IMR-90 (cell line): ENCODE measurements at regions of chr2 and their contacts with region 1.

Region 1: GRCh38 chr2:197416268-197416667 is 18.6 kb downstream of the SF3B1 start:
- DNase-seq: no peak
- ATAC-seq: no peak
- H3K4me3 ChIP-seq: no peak overlapping the region
- H3K27ac ChIP-seq: no peak overlapping the region
- H3K4me1 ChIP-seq: no peaks in the 10 kb centered on the region; the same call in 1 of the 2 replicates
- H3K27me3 ChIP-seq: no peaks in the 10 kb centered on the region
- CTCF ChIP-seq: no peak
- POLR2A ChIP-seq: no peak
- RAD21 ChIP-seq: no peak

Region 2: GRCh38 chr2:197480165-197481036 is 64.1 kb after region 1 on chr2:
- CTCF ChIA-PET with region 1: no interaction called
- POLR2A ChIA-PET with region 1: no interaction called
- dilution Hi-C with region 1: no loop called
- in situ Hi-C with region 1: no loop called
- intact Hi-C with region 1: loop called (anchors 5 kb)
- DNase-seq: no peak
- ATAC-seq: no peak
- H3K4me3 ChIP-seq: no peak overlapping the region
- H3K27ac ChIP-seq: no peak overlapping the region
- H3K4me1 ChIP-seq: no peaks in the 10 kb centered on the region
- H3K27me3 ChIP-seq: no peaks in the 10 kb centered on the region
- CTCF ChIP-seq: no peak
- POLR2A ChIP-seq: no peak
- RAD21 ChIP-seq: no peak

Region 3: DNA sequence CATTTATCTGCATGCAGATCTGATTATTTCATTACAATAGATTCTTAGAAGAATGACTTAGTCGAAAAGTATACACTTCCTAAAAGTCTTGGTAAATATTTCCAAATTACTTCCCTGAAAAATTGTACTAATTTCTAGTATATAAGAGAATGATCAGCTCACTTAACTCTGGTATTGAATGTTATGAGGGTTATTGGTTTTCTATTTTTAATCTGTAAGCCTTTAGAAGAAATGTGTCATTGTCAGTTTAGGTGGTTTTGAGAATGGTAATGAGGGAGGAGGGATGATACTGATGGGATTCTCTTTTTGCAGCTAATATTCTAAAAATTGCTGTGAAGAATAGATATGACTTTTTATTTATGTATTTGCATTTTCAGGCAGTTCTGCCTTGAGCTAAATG is 123.5 kb after region 1 on chr2:
- CTCF ChIA-PET with region 1: no interaction called
- POLR2A ChIA-PET with region 1: no interaction called
- dilution Hi-C with region 1: no loop called
- in situ Hi-C with region 1: no loop called
- intact Hi-C with region 1: no loop called
- DNase-seq: no peak
- ATAC-seq: no peak
- H3K4me3 ChIP-seq: no peak overlapping the region
- H3K27ac ChIP-seq: no peak overlapping the region
- H3K4me1 ChIP-seq: no peaks in the 10 kb centered on the region
- H3K27me3 ChIP-seq: no peaks in the 10 kb centered on the region
- CTCF ChIP-seq: no peak
- POLR2A ChIP-seq: no peak
- RAD21 ChIP-seq: no peak